ENCODE measurements at regions of chr19 and their contacts with region 1.

Region 1: DNA sequence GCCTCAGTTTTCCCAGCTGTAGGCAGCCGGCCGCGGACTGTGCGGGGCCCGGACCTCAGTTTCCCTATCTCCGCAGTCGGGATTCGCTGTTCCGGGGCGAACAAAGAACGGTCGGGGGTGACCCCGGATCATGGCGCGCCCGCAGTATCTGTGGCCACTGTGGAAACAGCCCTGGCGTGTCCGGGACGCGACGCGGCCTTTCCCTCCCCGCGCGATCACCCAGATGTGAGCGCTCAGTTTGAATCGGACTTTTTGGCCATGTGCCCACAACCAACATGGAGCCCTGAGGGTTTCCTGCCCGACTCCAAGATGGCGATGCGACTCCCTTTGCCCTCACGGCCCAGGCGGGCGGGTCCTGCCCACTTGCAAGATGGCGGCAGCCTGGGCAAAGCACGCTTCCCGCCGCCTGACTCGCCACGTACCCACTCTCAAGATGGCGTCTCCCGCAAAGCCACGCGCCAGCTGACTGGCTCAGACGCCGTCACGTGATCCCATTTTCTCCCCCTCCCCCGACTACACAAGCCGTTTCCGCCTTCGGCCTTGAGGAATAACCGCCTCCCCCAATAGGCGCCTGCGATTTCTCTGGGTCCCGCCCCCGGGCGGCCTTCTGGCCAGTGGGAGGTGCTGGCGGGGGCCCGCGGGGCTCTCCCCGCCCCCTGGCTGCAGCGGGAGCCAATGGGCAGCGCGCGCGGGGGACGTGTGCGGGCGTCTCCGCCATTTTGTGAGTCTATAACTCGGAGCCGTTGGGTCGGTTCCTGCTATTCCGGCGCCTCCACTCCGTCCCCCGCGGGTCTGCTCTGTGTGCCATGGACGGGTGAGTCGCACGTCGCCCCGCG is at the start of gene PTBP1:
- DNase-seq: peak; percentile 97
- ATAC-seq: peak; percentile 86
- H3K4me3 Mint-ChIP-seq: peak within 1 kb of the TSS; percentile 89
- H3K27ac Mint-ChIP-seq: peak within 1 kb of the TSS; percentile 79
- H3K4me1 Mint-ChIP-seq: peaks cover 34% of the 10 kb centered on the region
- H3K27me3 Mint-ChIP-seq: peaks cover under 1% of the 10 kb centered on the region
- CTCF ChIP-seq: no peak
- total RNA-seq, gene PTBP1: 404 and 417 TPM in 2 replicates

Region 2: GRCh38 chr19:572140-572742 is 224.7 kb before region 1 on chr19 and contains the start of gene BSG:
- CTCF ChIA-PET with region 1: no interaction called
- POLR2A ChIA-PET with region 1: no interaction called
- intact Hi-C with region 1: loop called (anchors 1 kb)
- DNase-seq: peak; percentile 98
- ATAC-seq: peak; percentile 82
- H3K4me3 Mint-ChIP-seq: peak within 1 kb of the TSS; percentile 97
- H3K27ac Mint-ChIP-seq: peak within 1 kb of the TSS; percentile 99
- H3K4me1 Mint-ChIP-seq: peaks cover 36% of the 10 kb centered on the region
- H3K27me3 Mint-ChIP-seq: no peaks in the 10 kb centered on the region
- CTCF ChIP-seq: no peak
- total RNA-seq, gene BSG: 150 and 152 TPM in 2 replicates

Region 3: GRCh38 chr19:680287-681028 is 116.5 kb before region 1 on chr19:
- CTCF ChIA-PET with region 1: no interaction called
- POLR2A ChIA-PET with region 1: interaction called, 6 read pairs
- intact Hi-C with region 1: loop called (anchors 1 kb)
- DNase-seq: peak; percentile 95
- ATAC-seq: peak; percentile 80
- H3K4me3 Mint-ChIP-seq: peak overlapping the region; percentile 95
- H3K27ac Mint-ChIP-seq: peak overlapping the region; percentile 98
- H3K4me1 Mint-ChIP-seq: peaks cover 14% of the 10 kb centered on the region
- H3K27me3 Mint-ChIP-seq: peaks cover 4% of the 10 kb centered on the region
- CTCF ChIP-seq: no peak

Region 4: GRCh38 chr19:695352-695949 is 101.5 kb before region 1 on chr19 and contains the start of gene PRSS57:
- CTCF ChIA-PET with region 1: no interaction called
- POLR2A ChIA-PET with region 1: no interaction called
- intact Hi-C with region 1: no loop called
- DNase-seq: no peak
- ATAC-seq: no peak
- H3K4me3 Mint-ChIP-seq: no peak within 1 kb of the TSS
- H3K27ac Mint-ChIP-seq: no peak within 1 kb of the TSS
- H3K4me1 Mint-ChIP-seq: no peaks in the 10 kb centered on the region
- H3K27me3 Mint-ChIP-seq: peaks cover 12% of the 10 kb centered on the region
- CTCF ChIP-seq: no peak
- total RNA-seq, gene PRSS57: not detected in 2 replicates

Region 5: DNA sequence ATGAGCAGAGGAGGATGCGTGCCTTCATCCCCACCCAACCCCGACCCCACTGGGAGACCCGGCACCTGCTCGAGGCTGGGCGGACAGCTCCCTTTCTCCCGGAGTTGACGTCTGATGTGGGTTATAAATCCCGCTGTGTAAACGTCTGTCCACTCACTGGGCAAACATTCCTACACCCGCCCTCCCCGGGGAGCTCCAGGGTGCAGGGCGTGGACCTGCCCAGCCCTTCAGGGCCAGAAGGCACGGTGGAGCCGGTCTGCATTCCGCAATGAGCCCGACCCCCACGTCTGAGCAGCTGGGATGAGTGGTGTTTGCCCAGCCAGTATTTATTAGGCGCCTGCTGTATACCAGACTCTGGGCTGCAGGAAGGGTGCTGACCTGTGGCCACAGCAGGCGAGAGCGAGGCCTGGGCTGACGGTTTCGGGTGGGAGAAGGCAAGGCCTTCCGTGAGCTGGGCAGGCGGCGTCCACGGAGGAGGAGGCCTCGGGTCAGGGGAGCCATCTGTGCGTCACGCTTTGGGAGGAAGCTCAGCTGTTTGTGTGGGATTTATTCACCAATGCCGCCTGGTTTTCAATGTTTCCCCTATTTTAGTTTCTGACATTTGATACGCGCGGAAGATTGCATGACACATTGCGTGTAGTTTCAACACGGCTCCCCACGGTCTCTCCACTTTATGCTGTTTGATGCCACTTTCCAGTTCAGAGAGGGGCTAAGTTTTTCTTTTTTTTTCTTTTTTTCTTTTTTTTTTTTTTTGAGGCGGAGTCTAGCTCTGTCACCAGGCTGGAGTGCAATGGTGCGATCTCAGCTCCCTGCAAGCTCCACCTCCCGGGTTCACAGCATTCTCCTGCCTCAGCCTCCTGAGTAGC is 44.0 kb before region 1 on chr19:
- CTCF ChIA-PET with region 1: no interaction called
- POLR2A ChIA-PET with region 1: no interaction called
- intact Hi-C with region 1: no loop called
- DNase-seq: no peak
- ATAC-seq: no peak
- H3K4me3 Mint-ChIP-seq: no peak overlapping the region
- H3K27ac Mint-ChIP-seq: no peak overlapping the region
- H3K4me1 Mint-ChIP-seq: no peaks in the 10 kb centered on the region
- H3K27me3 Mint-ChIP-seq: no peaks in the 10 kb centered on the region
- CTCF ChIP-seq: no peak

Region 6: DNA sequence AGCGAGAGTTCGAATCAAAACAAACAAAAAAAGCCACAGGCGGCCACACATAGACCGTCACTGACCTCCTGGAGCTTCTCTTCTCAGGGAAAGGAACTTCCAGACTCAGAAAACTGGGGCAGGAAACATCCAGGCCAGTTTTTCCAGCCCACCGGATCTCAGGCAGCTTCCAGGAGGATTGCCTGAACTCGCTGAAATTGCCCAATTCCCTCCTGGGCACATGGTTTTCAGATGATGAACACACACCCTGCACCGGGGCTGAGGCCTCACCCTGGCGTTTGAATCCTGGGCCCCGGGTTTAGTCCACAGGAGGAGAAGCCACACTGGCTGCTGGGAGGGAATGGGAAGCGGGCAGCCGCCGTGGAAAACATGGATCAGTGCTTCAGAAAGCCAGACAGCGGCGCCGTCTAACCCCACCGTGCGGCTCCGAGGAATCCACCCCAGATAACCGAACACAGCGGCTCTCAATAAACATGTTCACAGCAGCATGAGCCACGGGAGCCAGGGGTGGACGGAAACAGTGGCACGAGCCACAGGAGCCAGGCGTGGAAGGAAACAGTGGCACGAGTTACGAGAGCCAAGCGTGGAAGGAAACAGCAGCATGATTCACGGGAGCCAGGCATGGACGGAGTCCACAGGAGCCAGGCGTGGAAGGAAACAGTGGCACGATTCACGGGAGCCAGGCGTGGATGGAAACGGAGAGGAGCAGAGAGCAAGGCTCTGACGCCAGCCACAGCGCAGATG is 17.8 kb before region 1 on chr19:
- CTCF ChIA-PET with region 1: no interaction called
- POLR2A ChIA-PET with region 1: no interaction called
- intact Hi-C with region 1: no loop called
- DNase-seq: no peak
- ATAC-seq: no peak
- H3K4me3 Mint-ChIP-seq: no peak overlapping the region
- H3K27ac Mint-ChIP-seq: no peak overlapping the region
- H3K4me1 Mint-ChIP-seq: no peaks in the 10 kb centered on the region
- H3K27me3 Mint-ChIP-seq: peaks cover 6% of the 10 kb centered on the region
- CTCF ChIP-seq: no peak

Region 7: DNA sequence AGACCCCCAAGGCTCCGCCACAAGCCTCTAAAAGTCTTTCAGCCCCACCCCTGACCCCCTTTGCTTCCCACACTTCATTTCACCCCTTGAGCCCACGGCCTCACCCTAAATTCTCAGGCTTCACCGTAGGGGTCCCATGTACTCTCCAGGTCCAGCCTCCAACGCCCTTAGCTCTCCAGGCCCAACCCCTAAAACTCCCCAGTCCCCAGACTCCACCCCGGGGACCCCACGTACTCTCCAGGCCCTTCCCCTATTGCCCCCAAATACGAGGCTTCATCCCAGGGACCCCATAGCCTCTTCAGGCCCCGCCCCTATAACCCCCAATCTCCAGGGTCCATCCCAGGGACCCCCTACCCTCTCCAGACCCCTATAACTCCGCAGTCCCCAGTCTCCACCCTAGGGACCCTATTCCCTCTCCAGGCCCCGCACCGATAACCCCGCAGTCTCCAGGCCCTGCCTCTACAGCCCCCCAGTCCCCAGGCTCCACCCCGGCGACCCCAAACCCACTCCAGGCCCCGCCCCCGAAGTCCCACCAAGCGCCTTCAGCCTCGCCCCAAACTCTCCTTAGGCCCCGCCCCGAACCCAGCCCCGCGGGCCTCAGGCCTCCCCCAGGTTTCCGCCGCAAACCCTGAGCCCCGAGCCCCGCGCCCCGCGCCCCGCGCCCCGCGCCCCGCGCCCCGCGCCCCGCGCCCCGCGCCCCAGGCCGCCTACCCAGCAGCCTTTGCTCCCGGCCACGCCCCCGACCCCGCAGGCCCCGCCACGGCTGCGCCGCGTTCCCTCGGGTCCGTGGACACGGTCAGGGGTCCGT is 95.5 kb after region 1 on chr19:
- CTCF ChIA-PET with region 1: no interaction called
- POLR2A ChIA-PET with region 1: interaction called, 6 read pairs
- intact Hi-C with region 1: loop called (anchors 1 kb)
- DNase-seq: no peak
- ATAC-seq: peak; percentile 57
- H3K4me3 Mint-ChIP-seq: peak overlapping the region; percentile 91
- H3K27ac Mint-ChIP-seq: peak overlapping the region; percentile 99
- H3K4me1 Mint-ChIP-seq: peaks cover 21% of the 10 kb centered on the region
- H3K27me3 Mint-ChIP-seq: no peaks in the 10 kb centered on the region
- CTCF ChIP-seq: no peak

Region 8: DNA sequence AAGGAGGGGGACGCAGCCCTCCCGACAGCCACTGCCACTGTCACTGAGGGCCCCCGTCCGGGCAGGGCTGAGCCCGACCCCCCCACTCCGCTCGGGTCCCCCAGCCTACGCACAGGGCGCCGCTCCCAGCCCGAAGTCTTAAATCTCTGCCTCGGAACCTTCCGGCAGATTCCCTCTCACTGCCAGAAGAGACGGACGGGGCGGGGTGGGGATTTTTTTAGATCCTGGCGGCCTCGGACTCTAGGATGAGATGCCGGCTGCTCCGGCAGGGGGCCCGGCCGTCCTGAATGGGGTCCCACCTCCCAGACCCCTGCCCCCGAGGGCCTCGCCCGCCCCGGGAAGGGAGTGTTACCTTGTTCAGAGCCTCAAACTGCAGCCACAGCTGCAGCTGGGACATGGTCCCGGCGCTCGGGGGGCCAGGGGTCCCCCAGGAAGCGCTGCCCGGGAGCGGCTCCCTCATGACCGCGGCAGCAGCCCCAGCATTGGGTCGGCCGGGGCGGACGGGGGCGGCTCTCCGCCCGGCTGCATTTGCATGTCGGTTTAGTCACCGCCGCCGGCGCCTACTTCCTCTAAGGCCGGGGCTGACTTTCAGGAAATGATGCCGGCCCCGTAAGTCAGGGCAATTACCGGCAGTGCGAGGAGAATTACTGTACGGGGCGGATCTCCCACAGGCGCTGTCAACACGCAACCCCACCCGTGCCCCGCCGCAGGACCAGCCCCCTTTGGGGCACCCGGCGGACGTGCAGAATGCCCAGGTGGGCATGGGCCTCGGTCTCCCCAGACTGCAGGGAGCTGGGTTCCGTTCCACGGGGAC is 335.0 kb after region 1 on chr19:
- CTCF ChIA-PET with region 1: no interaction called
- POLR2A ChIA-PET with region 1: no interaction called
- intact Hi-C with region 1: loop called (anchors 1 kb)
- DNase-seq: peak; percentile 76
- ATAC-seq: peak; percentile 65
- H3K4me3 Mint-ChIP-seq: peak overlapping the region; percentile 86
- H3K27ac Mint-ChIP-seq: peak overlapping the region; percentile 77
- H3K4me1 Mint-ChIP-seq: peaks cover 47% of the 10 kb centered on the region
- H3K27me3 Mint-ChIP-seq: no peaks in the 10 kb centered on the region
- CTCF ChIP-seq: no peak

Region 9: GRCh38 chr19:1438035-1438932 is 641.4 kb after region 1 on chr19 and contains the start of gene RPS15:
- CTCF ChIA-PET with region 1: no interaction called
- POLR2A ChIA-PET with region 1: no interaction called
- intact Hi-C with region 1: loop called (anchors 1 kb)
- DNase-seq: peak; percentile 94
- ATAC-seq: peak; percentile 92
- H3K4me3 Mint-ChIP-seq: peak within 1 kb of the TSS; percentile 99
- H3K27ac Mint-ChIP-seq: peak within 1 kb of the TSS; percentile 99
- H3K4me1 Mint-ChIP-seq: peaks cover 26% of the 10 kb centered on the region
- H3K27me3 Mint-ChIP-seq: no peaks in the 10 kb centered on the region
- CTCF ChIP-seq: no peak
- total RNA-seq, gene RPS15: 1,788 and 2,029 TPM in 2 replicates

Region 10: DNA sequence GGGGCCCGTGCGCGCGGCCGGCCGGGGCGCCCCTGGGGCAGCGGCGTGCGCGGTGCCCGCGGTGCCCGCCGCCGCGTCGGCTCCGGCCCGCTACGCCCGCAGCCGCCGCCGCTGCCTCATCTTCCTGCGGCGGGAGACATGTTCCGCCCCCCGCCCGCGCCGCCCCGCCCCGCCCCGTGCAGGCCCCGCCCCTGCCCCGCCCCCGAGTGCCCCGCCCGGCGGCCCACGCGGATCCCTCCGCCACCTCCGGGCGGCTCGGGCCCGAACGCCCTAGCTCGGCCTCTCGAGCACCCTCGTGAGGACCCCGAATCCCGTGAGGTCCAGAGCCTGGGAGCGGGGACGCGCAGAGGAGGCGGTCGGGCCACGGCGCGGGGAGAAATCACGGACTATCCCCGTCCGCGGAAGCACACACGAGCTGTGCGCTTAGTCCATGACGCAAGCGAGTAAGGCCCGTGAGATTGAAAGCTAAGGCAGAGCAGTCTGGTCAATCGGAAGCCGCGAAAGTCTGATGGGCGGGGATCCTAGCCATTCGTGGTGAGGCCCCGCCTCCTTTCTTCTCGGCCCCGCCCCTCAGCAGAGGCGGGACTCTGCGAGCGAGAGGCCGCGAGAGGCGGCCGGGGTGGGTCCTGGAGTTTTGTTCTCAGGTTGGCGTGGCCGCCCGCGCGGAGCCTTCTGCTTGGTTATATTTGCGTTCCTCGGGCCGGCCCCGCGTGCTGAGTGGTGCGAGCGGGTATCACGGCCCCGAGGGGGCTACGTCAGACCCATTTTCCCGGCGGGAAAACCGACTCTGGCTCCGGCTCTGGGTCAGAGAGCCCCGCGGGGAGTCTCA is 855.8 kb after region 1 on chr19 and contains the start of gene TCF3:
- CTCF ChIA-PET with region 1: no interaction called
- POLR2A ChIA-PET with region 1: no interaction called
- intact Hi-C with region 1: loop called (anchors 5 kb)
- DNase-seq: peak; percentile 99
- ATAC-seq: peak; percentile 82
- H3K4me3 Mint-ChIP-seq: peak within 1 kb of the TSS; percentile 91
- H3K27ac Mint-ChIP-seq: peak within 1 kb of the TSS; percentile 95
- H3K4me1 Mint-ChIP-seq: peaks cover 68% of the 10 kb centered on the region
- H3K27me3 Mint-ChIP-seq: no peaks in the 10 kb centered on the region
- CTCF ChIP-seq: no peak
- total RNA-seq, gene TCF3: 139 and 143 TPM in 2 replicates